ENCODE measurements at regions of chr19 and their contacts with region 1.

Region 1: GRCh38 chr19:14775869-14776586 is 2.3 kb downstream of the ADGRE2 start:
- DNase-seq: no peak
- H3K4me3 ChIP-seq: peak overlapping the region; percentile 36
- H3K27me3 ChIP-seq: no peaks in the 10 kb centered on the region
- CTCF ChIP-seq: no peak

Region 2: DNA sequence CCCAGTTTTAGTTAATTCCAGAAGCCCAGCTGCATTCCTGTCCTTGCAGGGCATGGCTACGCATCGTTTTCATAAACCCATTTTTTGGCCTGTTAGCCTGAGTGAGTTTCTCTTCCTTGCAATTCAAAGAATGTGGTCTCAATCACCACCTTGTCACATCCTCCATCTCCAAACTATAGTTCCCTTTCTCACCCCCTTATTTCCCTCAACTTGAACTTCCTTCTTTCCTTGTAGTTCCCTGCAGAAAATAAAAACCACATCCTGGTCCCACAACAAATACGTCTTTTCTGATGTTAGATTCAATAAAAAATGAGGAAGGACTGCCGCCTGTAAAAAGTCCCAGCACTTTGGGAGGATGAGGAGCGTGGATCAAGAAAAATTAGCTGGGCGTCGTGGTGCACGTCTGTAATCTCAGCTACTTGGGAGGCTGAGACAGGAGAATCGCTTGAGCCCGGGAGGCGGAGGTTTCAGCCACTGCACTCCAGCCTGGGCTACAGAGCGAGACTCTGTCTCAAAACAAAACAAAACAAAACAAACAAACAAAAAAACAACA is 114.6 kb before region 1 on chr19:
- CTCF ChIA-PET with region 1: no interaction called
- POLR2A ChIA-PET with region 1: no interaction called
- DNase-seq: no peak
- H3K4me3 ChIP-seq: no peak overlapping the region
- H3K27me3 ChIP-seq: no peaks in the 10 kb centered on the region
- CTCF ChIP-seq: no peak

Region 3: GRCh38 chr19:14689598-14690503 is 86.2 kb before region 1 on chr19 and contains the start of gene ZNF333:
- CTCF ChIA-PET with region 1: no interaction called
- POLR2A ChIA-PET with region 1: interaction called, 20 read pairs
- DNase-seq: peak; percentile 20
- H3K4me3 ChIP-seq: peak within 1 kb of the TSS; percentile 66
- H3K27me3 ChIP-seq: no peaks in the 10 kb centered on the region
- CTCF ChIP-seq: no peak
- polyA plus RNA-seq, gene ZNF333: 12.2 and 16.4 TPM in 2 replicates

Region 4: GRCh38 chr19:14795078-14795721 is 19.2 kb after region 1 on chr19:
- CTCF ChIA-PET with region 1: no interaction called
- POLR2A ChIA-PET with region 1: no interaction called
- DNase-seq: no peak
- H3K4me3 ChIP-seq: no peak overlapping the region
- H3K27me3 ChIP-seq: no peaks in the 10 kb centered on the region
- CTCF ChIP-seq: no peak

Measured in BJ (cell line).